Right ventricle myocardium inferior (tissue), 1 donor: ENCODE measurements at regions of chr19 and their contacts with region 1.

Region 1: GRCh38 chr19:45523642-45524256 is 16.5 kb downstream of the VASP start:
- DNase-seq: peak; percentile 90
- ATAC-seq: peak; percentile 96

Region 2: GRCh38 chr19:45506246-45506990 is 17.3 kb before region 1 on chr19:
- intact Hi-C with region 1: no loop called
- DNase-seq: peak; percentile 98
- ATAC-seq: peak; percentile 87

Region 3: DNA sequence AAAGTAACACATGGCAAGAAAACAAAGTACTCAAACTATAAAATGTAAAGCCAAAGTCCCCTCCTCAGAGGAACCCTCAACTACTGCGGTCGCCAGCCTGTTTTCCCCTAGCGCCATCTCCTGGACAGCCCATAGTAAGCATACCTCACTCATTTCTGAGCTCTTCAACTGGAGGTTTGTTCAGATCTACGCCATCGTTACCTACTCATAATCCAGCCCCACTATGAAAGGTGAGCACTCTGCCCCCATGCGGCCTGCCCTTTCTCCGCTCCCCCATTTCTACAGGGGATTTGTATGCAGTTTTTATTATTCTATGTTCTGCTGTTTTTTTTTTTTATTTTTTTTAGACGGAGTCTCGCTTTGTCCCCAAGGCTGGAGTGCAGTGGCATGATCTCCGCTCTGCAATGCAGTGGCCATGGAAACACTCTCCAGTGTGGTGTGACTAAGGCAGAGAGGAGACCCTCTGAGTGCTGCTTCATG is 34.7 kb after region 1 on chr19:
- intact Hi-C with region 1: loop called (anchors 5 kb)
- DNase-seq: no peak
- ATAC-seq: no peak

Region 4: DNA sequence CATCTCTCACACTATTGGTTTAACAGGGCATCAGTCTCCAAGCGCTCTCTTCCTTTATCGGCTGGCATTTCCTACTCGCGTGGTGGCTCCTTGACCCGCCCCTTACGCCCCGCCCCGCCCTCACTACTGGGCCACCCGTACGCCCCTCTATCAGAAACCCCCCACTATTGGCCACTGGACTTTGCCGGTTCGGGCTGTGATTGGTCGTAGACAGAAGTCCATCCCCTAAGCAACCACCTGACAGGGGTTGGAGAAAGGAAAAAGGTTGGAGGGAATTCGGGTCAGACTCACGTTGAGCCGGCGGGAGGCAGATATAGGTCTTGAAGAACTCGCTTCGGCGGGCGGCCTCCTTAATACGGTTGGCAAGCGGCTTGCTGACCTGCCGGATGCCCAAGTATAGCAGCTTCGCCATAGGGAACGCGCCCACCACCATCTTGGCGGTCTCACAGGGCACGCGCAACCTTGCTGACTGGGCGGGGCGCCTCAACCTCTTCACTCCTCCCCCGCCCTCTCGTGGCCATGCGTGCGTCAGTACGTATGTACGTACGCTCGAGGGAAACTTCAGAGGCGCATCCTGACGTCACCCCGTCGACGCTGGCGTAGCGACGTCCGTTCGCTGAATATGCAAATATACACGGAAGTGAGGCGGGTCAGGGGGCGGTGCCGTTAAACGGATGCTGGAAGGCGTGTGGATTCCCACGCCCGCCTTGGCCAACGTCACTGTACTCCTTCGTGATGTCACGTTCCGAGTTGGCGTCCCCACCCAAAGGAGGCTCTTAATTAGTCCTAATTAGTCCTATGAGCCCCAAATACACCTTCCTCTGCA is 60.8 kb after region 1 on chr19 and contains the start of gene OPA3:
- intact Hi-C with region 1: loop called (anchors 10 kb)
- DNase-seq: peak; percentile 100
- ATAC-seq: peak; percentile 97
- total RNA-seq, gene OPA3: 24.5 TPM

Region 5: GRCh38 chr19:45681391-45682015 is 157.8 kb after region 1 on chr19:
- intact Hi-C with region 1: loop called (anchors 5 kb)
- DNase-seq: peak; percentile 94
- ATAC-seq: peak; percentile 86